ENCODE measurements at regions of chr7 and their contacts with region 1.

Region 1: DNA sequence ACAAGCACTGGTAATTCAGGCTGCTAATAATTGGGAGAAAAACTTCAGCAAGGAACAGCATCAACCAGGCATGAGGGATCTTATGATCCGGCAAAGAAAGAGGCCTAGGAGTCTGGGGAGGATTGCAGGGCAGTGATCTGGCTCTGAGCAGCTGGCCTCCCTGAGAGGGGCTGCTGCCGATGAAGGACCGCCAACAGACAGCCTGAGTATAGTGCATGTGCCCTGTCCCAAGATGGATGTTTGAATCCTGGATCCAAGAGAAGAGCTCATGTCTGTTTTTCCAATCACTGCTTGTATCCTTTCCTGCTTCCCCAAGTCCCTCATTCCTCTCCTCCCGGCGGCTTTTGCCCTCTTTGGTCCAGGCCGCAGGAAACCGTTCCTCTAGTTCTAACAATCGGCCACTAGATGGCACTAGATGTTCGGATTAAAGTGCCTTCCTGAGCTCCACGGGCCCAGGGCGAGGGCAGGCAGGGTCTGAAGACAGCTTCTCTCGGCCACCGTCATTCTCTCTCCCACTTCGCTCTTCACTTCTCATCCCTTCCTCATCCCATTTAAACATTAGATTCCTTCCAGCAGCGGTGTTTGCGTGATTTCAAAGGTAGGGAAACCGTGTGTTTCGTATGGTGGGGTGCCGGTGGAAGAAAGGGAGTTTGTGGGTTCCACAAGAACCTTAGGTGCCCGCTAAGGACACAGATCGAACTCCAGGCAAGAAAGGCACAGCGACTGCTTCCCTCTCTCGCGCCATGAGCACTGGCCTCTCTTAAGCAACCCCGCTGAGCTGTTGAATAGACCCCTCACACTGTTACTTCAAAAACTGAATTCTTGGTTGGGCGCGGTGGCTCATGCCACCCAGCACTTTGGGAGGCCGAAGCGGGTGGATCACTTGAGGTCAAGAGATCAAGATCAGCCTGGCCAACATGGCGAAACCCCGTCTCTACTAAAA is 82.4 kb downstream of the ADCYAP1R1 start:
- DNase-seq: peak; percentile 86
- H3K4me3 ChIP-seq: no peak overlapping the region; a peak in 1 of 4 replicates
- H3K27ac ChIP-seq: no peak overlapping the region
- H3K4me1 ChIP-seq: no peaks in the 10 kb centered on the region; a peak in 1 of 4 replicates
- H3K27me3 ChIP-seq: peaks cover 10% of the 10 kb centered on the region; the same call in 1 of the 2 replicates
- CTCF ChIP-seq: peak; percentile 88
- EP300 ChIP-seq: no peak
- RAD21 ChIP-seq: peak; percentile 91

Region 2: GRCh38 chr7:30572212-30572841 is 562.2 kb before region 1 on chr7:
- CTCF ChIA-PET with region 1: no interaction called
- POLR2A ChIA-PET with region 1: no interaction called
- DNase-seq: no peak
- H3K4me3 ChIP-seq: no peak overlapping the region
- H3K27ac ChIP-seq: no peak overlapping the region
- H3K4me1 ChIP-seq: no peaks in the 10 kb centered on the region
- H3K27me3 ChIP-seq: no peaks in the 10 kb centered on the region
- CTCF ChIP-seq: no peak
- EP300 ChIP-seq: no peak
- RAD21 ChIP-seq: no peak

Region 3: DNA sequence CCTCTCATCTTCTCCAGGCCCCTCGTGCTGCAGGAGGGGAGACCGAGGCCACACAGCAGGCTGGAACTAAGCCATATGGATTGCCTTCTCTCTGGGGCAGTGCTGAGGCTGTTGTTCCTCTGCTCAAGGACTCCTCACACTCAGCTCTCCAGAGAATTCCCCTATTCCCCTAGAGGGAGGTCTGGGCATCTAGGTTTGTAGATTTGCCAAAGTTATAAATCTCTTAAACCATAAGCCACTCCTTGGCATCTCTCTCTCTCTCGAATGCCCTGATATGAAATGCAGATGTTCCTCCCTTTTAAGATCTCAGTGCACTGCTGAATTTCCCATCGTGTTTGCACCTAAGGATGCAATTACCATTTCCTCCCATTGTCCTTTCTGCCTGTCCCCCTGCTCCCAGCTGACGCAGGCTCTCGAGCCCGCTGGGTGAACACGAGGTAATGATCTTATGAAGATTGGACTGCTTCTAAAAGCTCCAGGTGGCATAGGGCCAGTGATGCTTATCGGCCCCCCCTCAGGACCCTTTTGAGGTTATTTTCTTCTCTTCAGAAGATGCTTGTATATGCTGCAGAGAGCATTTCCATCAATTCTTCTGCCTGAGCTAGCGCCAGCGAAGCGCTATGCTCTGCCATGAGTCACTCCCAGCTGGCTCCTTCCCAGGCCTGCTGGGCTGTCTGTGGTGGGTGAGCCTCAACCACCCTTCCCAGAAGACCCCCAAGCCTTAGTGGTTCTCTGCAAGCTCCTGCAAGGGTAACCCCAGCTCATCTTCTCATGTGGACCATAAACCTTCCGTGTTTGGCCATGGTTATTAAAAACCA is 264.5 kb before region 1 on chr7:
- CTCF ChIA-PET with region 1: no interaction called
- POLR2A ChIA-PET with region 1: no interaction called
- DNase-seq: peak; percentile 78
- H3K4me3 ChIP-seq: peak overlapping the region in 1 of 2 experiments; percentile 21; a peak in 1 of 4 replicates
- H3K27ac ChIP-seq: peak overlapping the region; percentile 45 to 68
- H3K4me1 ChIP-seq: peaks cover 18 to 24% of the 10 kb centered on the region in 2 experiments; a peak in 3 of 4 replicates
- H3K27me3 ChIP-seq: no peaks in the 10 kb centered on the region
- CTCF ChIP-seq: peak; percentile 13; the same call in 1 of the 2 replicates
- EP300 ChIP-seq: peak; percentile 38 to 92; a peak in 2 of 4 replicates
- RAD21 ChIP-seq: no peak

Region 4: GRCh38 chr7:30974605-30975255 is 159.8 kb before region 1 on chr7:
- CTCF ChIA-PET with region 1: interaction called, 1,191 read pairs
- POLR2A ChIA-PET with region 1: no interaction called
- DNase-seq: peak; percentile 76
- H3K4me3 ChIP-seq: no peak overlapping the region
- H3K27ac ChIP-seq: no peak overlapping the region
- H3K4me1 ChIP-seq: peaks cover 0 to 9% of the 10 kb centered on the region in 2 experiments; a peak in 1 of 4 replicates
- H3K27me3 ChIP-seq: peaks cover 34% of the 10 kb centered on the region; the same call in 1 of the 2 replicates
- CTCF ChIP-seq: peak; percentile 72
- EP300 ChIP-seq: no peak
- RAD21 ChIP-seq: peak; percentile 79

Region 5: DNA sequence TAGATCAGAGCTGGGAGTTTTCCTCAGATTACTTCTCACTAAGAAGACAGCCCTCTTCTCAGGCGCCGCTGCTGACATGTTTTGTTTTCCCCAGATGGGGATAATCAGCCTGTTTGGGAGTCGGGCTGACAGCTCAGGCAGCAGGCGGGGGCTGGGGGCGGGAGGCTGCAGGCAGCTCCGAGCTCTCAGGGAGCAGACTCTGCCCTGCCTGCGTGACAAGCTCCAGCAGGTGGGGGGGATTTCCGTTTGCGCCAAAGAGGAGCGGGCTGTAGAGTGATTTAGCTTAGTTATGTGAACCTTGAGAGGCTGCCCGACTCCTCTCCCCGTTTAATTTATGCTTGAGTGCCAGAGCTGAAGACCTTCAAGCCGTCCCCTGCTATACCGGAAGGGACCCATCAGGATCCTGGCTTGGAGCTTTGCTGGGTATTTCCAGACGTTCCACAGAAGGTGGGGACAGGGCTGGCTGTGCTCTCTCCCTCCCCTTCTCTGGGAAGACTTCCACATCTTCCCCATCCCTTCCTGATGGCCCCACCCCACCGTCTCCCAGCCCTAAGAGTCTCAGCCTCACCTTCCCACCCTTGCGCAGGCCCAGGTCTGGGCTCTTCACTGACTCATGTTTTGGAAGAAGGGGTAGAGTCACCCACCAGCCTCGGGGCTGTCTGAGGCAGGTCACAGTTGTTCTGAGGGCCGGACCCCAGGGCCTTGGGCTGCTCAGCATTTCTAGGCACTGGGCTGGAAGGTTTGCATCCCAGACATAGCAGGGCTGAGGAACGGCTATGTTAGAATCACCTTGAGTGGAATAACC is 107.2 kb before region 1 on chr7:
- CTCF ChIA-PET with region 1: interaction called, 16 read pairs
- POLR2A ChIA-PET with region 1: no interaction called
- DNase-seq: peak; percentile 79
- H3K4me3 ChIP-seq: no peak overlapping the region
- H3K27ac ChIP-seq: no peak overlapping the region
- H3K4me1 ChIP-seq: peaks cover 0 to 23% of the 10 kb centered on the region in 2 experiments; a peak in 2 of 4 replicates
- H3K27me3 ChIP-seq: peaks cover 17% of the 10 kb centered on the region
- CTCF ChIP-seq: no peak
- EP300 ChIP-seq: no peak
- RAD21 ChIP-seq: no peak

Region 6: GRCh38 chr7:31098642-31099360 is 35.7 kb before region 1 on chr7:
- CTCF ChIA-PET with region 1: interaction called, 344 read pairs
- POLR2A ChIA-PET with region 1: no interaction called
- DNase-seq: no peak
- H3K4me3 ChIP-seq: no peak overlapping the region
- H3K27ac ChIP-seq: no peak overlapping the region
- H3K4me1 ChIP-seq: no peaks in the 10 kb centered on the region; a peak in 1 of 4 replicates
- H3K27me3 ChIP-seq: peaks cover 21% of the 10 kb centered on the region
- CTCF ChIP-seq: no peak
- EP300 ChIP-seq: no peak
- RAD21 ChIP-seq: no peak

Region 7: GRCh38 chr7:31192986-31193385 is 58.5 kb after region 1 on chr7:
- CTCF ChIA-PET with region 1: interaction called, 21 read pairs
- POLR2A ChIA-PET with region 1: no interaction called
- DNase-seq: peak; percentile 89
- H3K4me3 ChIP-seq: peak overlapping the region in 1 of 2 experiments; percentile 33; a peak in 2 of 4 replicates
- H3K27ac ChIP-seq: no peak overlapping the region
- H3K4me1 ChIP-seq: peaks cover 0 to 2% of the 10 kb centered on the region in 2 experiments; a peak in 1 of 4 replicates
- H3K27me3 ChIP-seq: peaks cover 5% of the 10 kb centered on the region; the same call in 1 of the 2 replicates
- CTCF ChIP-seq: peak; percentile 83
- EP300 ChIP-seq: no peak
- RAD21 ChIP-seq: peak; percentile 86

Region 8: DNA sequence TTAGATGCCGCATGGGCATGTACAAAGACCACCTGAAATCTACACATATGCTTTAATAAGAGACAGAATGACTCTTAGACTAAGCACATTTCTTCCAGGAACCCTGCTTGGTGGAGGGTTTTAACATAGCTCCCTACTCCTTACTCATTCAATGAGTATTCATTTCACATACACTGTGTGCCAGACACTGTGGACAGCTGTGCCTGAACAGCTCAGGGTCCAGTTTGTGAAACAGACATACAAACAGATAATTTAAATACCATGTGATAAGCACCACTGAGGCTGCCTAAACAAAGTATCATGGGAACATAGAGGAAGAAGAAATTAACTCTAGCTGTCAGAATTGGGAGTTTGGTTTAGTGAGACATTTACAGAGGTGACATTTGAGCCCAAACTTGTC is 314.1 kb after region 1 on chr7:
- CTCF ChIA-PET with region 1: interaction called, 33 read pairs
- POLR2A ChIA-PET with region 1: no interaction called
- DNase-seq: no peak
- H3K4me3 ChIP-seq: no peak overlapping the region
- H3K27ac ChIP-seq: no peak overlapping the region
- H3K4me1 ChIP-seq: no peaks in the 10 kb centered on the region
- H3K27me3 ChIP-seq: peaks cover 8% of the 10 kb centered on the region; the same call in 1 of the 2 replicates
- CTCF ChIP-seq: no peak
- EP300 ChIP-seq: no peak
- RAD21 ChIP-seq: no peak

Region 9: DNA sequence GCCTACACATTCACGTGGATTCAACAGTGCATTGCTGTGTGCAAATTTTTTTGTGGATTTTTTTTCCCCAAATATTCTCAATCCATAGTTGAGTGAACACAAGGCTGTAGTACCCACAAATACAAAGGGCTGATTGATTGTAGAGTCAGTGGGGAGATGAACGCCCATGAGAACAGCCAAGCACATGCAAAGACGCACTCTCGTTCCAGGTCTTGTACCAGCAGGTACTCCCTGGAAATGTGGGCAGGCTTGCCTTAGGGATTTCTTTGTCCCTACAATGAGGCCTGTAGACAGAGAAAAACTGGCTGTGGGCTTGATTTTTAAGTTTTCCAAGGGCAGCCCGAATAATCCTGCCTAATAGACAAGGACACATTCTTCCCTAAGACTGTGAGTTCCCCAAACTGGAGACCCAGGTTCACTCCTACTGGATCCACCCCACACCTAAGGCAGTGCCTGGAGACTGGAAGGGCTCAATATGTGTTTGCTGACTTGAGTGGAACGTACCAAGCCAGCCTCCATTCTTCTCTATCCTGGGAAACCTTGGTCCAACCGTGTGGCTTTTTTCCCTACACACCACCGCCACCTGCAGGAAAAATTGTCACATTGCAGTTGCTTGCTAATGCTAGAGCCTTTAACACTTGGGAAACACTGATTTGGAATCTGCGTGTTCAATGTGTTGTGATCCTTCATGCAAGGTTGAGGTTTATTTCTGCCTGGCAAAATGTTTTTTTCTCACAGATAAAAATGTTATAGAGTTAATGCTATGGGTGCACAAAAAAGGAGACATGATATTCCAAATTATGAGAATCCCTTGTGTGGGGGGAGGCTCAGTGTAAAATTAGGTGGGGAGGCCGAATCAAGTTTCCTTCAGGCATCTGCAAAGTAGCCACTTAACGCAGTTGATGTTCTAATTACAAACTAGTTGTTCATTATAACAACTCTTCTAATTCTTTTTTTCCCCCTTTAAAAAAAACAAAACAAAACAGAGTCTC is 601.8 kb after region 1 on chr7:
- CTCF ChIA-PET with region 1: interaction called, 42 read pairs
- POLR2A ChIA-PET with region 1: no interaction called
- DNase-seq: peak; percentile 64
- H3K4me3 ChIP-seq: no peak overlapping the region
- H3K27ac ChIP-seq: no peak overlapping the region
- H3K4me1 ChIP-seq: no peaks in the 10 kb centered on the region
- H3K27me3 ChIP-seq: peaks cover 54% of the 10 kb centered on the region; the same call in 1 of the 2 replicates
- CTCF ChIP-seq: peak; percentile 94
- EP300 ChIP-seq: no peak
- RAD21 ChIP-seq: peak; percentile 95

Measured in SK-N-SH (cell line).